Activated CD8-positive, alpha-beta T cell treated with anti-CD3 and anti-CD28 coated beads for 36 hours (primary cell): ENCODE measurements at regions of chr12 and their contacts with region 1.

Region 1: GRCh38 chr12:122793685-122794106 is 19.3 kb downstream of the CCDC62 start:
- DNase-seq: peak; percentile 9
- ATAC-seq: peak; percentile 75
- H3K4me3 Mint-ChIP-seq: no peak overlapping the region
- H3K27ac Mint-ChIP-seq: no peak overlapping the region
- H3K4me1 Mint-ChIP-seq: peaks cover 2% of the 10 kb centered on the region
- H3K27me3 Mint-ChIP-seq: no peaks in the 10 kb centered on the region
- CTCF ChIP-seq: peak; percentile 74

Region 2: GRCh38 chr12:122813310-122813713 is 19.6 kb after region 1 on chr12:
- CTCF ChIA-PET with region 1: interaction called, 25 read pairs
- POLR2A ChIA-PET with region 1: no interaction called
- intact Hi-C with region 1: no loop called
- DNase-seq: no peak
- ATAC-seq: no peak
- H3K4me3 Mint-ChIP-seq: no peak overlapping the region
- H3K27ac Mint-ChIP-seq: no peak overlapping the region
- H3K4me1 Mint-ChIP-seq: no peaks in the 10 kb centered on the region
- H3K27me3 Mint-ChIP-seq: no peaks in the 10 kb centered on the region
- CTCF ChIP-seq: no peak

Region 3: GRCh38 chr12:122834104-122834920 is 40.6 kb after region 1 on chr12:
- CTCF ChIA-PET with region 1: interaction called, 31 read pairs
- POLR2A ChIA-PET with region 1: no interaction called
- intact Hi-C with region 1: no loop called
- DNase-seq: peak; percentile 38
- ATAC-seq: peak; percentile 12
- H3K4me3 Mint-ChIP-seq: peak overlapping the region; percentile 84
- H3K27ac Mint-ChIP-seq: peak overlapping the region; percentile 83
- H3K4me1 Mint-ChIP-seq: peaks cover 30% of the 10 kb centered on the region
- H3K27me3 Mint-ChIP-seq: no peaks in the 10 kb centered on the region
- CTCF ChIP-seq: no peak

Region 4: GRCh38 chr12:122860346-122861090 is 66.8 kb after region 1 on chr12:
- CTCF ChIA-PET with region 1: interaction called, 12 read pairs
- POLR2A ChIA-PET with region 1: no interaction called
- intact Hi-C with region 1: no loop called
- DNase-seq: peak; percentile 88
- ATAC-seq: peak; percentile 83
- H3K4me3 Mint-ChIP-seq: no peak overlapping the region
- H3K27ac Mint-ChIP-seq: no peak overlapping the region
- H3K4me1 Mint-ChIP-seq: no peaks in the 10 kb centered on the region
- H3K27me3 Mint-ChIP-seq: no peaks in the 10 kb centered on the region
- CTCF ChIP-seq: peak; percentile 91